IMR-90 (cell line): ENCODE measurements at regions of chr10 and their contacts with region 1.

Region 1: DNA sequence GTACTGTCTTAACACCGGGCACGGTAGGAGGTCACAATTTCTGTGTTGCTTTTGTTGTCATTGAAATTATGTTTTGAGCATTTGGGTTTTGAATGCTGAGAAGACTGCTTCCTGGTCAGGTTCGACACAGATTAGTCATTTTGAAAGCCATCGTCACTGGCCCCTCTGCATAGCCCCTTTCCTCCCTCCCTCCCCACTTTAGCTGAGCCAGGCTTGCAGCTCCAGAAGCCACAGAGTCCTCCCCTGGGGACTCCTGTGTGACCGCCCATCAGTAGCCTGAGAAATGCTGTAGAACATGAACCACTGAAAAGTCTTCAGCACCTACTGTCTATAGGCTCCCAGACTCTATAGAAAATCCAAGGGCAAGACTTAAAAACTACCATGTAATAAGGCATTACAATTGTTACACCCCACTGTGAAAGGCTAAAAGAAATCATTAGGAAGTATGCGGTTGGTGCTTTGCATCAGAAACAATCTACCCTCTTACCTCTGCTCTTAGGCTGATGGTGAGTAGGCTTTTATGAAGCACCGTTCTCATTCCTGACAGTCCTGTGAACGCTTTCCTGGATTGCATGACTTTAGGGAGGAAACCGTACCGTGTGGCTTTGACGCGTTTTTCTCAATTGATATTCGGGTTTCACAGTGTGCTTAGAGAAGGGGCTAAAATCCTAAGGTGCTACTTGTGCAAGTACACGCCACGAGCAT is 24.8 kb downstream of the JCAD start:
- DNase-seq: no peak
- ATAC-seq: no peak
- H3K4me3 ChIP-seq: no peak overlapping the region
- H3K27ac ChIP-seq: no peak overlapping the region
- H3K4me1 ChIP-seq: peaks cover 4% of the 10 kb centered on the region
- H3K27me3 ChIP-seq: no peaks in the 10 kb centered on the region
- CTCF ChIP-seq: no peak
- POLR2A ChIP-seq: no peak
- RAD21 ChIP-seq: no peak

Region 2: GRCh38 chr10:29465384-29465783 is 569.2 kb before region 1 on chr10:
- CTCF ChIA-PET with region 1: no interaction called
- POLR2A ChIA-PET with region 1: interaction called, 12 read pairs
- dilution Hi-C with region 1: no loop called
- in situ Hi-C with region 1: no loop called
- intact Hi-C with region 1: no loop called
- DNase-seq: no peak
- ATAC-seq: no peak
- H3K4me3 ChIP-seq: no peak overlapping the region
- H3K27ac ChIP-seq: no peak overlapping the region
- H3K4me1 ChIP-seq: peaks cover 4% of the 10 kb centered on the region; the same call in 1 of the 2 replicates
- H3K27me3 ChIP-seq: no peaks in the 10 kb centered on the region
- CTCF ChIP-seq: 0 out of 2 replicates have a peak, but pooled peaks have one; percentile 4
- POLR2A ChIP-seq: no peak
- RAD21 ChIP-seq: no peak

Region 3: DNA sequence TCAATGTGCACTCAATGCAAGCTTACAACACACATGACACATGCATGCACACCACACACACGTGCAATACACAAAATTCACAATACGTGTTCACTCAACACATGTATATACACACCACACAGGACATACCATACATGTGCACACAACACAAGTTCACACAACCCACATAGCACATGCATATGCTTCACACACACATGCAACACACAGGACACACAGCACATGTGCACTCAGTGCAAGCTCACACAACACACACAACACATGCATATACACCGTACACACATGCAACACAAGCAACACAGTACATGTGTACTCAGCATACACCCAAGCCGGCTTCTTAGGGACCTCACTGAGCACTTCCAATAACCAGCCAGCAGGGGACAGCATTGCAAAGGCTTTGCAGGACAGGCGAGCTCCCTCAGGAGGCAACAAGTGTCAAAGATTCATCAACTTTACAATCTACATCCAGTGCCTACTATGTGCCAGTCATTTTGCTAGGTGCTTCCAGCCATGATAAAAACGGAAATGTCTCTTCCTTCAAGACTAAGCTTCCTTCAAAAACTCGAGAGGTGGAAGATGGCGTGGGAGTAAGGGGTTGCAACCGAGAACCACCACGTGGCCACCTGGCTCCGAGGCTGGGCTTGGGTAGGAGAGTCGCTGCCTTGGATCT is 36.3 kb before region 1 on chr10:
- CTCF ChIA-PET with region 1: no interaction called
- POLR2A ChIA-PET with region 1: no interaction called
- dilution Hi-C with region 1: no loop called
- in situ Hi-C with region 1: no loop called
- intact Hi-C with region 1: no loop called
- DNase-seq: peak; percentile 82
- ATAC-seq: peak; percentile 78
- H3K4me3 ChIP-seq: no peak overlapping the region
- H3K27ac ChIP-seq: no peak overlapping the region
- H3K4me1 ChIP-seq: peaks cover 21% of the 10 kb centered on the region
- H3K27me3 ChIP-seq: peaks cover 4% of the 10 kb centered on the region
- CTCF ChIP-seq: peak; percentile 99
- POLR2A ChIP-seq: 0 out of 2 replicates have a peak, but pooled peaks have one; percentile 29
- RAD21 ChIP-seq: peak; percentile 100

Region 4: GRCh38 chr10:30348378-30348776 is 313.8 kb after region 1 on chr10:
- CTCF ChIA-PET with region 1: no interaction called
- POLR2A ChIA-PET with region 1: no interaction called
- dilution Hi-C with region 1: no loop called
- in situ Hi-C with region 1: no loop called
- intact Hi-C with region 1: loop called (anchors 5 kb)
- DNase-seq: peak; percentile 2
- ATAC-seq: peak; percentile 33
- H3K4me3 ChIP-seq: peak overlapping the region; percentile 97
- H3K27ac ChIP-seq: peak overlapping the region; percentile 99
- H3K4me1 ChIP-seq: peaks cover 2% of the 10 kb centered on the region
- H3K27me3 ChIP-seq: no peaks in the 10 kb centered on the region
- CTCF ChIP-seq: no peak
- POLR2A ChIP-seq: no peak
- RAD21 ChIP-seq: no peak